ENCODE measurements at regions of chr20 and their contacts with region 1.

Region 1: DNA sequence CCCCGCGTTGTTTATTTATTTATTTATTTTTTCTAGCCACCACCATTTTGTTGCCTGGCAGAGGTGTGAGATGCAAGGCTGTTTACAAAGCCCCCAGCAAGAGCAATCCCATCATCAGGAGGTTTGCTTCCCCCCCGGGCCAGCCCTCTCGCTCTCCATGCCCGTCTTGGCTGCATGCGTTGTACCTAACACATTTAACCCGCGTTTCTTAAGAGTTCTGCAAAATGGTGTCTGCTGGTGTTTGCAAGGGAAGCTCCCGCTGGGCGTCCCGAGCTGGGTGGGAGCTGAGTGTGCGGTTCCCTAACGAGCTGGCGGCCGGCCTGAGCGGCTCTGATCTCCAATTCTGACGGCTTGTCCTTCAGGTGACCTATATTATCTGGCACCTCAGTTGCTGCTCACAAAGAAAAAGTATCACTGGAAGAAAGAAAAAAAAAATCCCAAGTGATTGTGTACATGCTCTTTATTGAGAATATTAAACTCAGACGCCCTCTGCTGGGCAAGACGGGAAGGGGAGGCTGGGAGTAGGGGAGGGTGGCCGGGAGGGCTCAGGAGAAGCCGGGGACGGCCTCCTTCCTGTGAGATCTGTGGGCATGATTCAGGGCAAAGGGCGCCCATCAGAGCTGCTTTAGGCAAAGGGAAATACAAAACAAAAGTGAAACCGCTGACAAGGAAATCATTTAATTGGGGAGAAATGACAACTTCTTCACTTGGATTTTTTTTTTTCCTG is 154.8 kb downstream of the BCAS1 start:
- DNase-seq: peak; percentile 98
- H3K4me3 ChIP-seq: peak overlapping the region; percentile 68
- H3K4me3 Mint-ChIP-seq: peak overlapping the region; percentile 92
- H3K27ac Mint-ChIP-seq: peak overlapping the region; percentile 82
- H3K4me1 ChIP-seq: peaks cover 10% of the 10 kb centered on the region
- H3K4me1 Mint-ChIP-seq: peaks cover 34% of the 10 kb centered on the region
- H3K27me3 ChIP-seq: no peaks in the 10 kb centered on the region
- H3K27me3 Mint-ChIP-seq: no peaks in the 10 kb centered on the region
- CTCF ChIP-seq: peak; percentile 98 to 99

Region 2: DNA sequence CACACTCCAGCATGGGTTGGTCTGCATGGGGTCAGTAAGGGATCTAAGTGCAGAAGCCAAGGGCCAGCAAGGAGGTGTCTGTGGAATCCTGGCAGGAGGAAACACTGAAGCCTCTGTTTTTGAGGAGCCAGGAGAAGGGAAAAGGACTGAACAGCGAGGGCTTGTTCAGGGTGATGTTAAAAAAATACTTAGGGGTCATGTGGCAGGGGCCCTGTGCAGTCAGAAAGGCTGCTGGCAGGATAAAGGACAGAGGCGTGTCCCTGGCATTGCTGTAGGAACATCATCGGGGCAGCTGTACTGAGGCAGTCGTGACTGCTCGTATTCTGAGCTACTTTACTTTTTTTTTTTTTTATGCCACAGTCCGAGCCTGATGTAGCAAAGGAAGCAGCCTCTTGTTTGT is 1597.0 kb before region 1 on chr20:
- CTCF ChIA-PET with region 1: no interaction called
- POLR2A ChIA-PET with region 1: no interaction called
- intact Hi-C with region 1: no loop called
- DNase-seq: no peak
- H3K4me3 ChIP-seq: no peak overlapping the region
- H3K4me3 Mint-ChIP-seq: no peak overlapping the region
- H3K27ac Mint-ChIP-seq: no peak overlapping the region
- H3K4me1 ChIP-seq: no peaks in the 10 kb centered on the region
- H3K4me1 Mint-ChIP-seq: no peaks in the 10 kb centered on the region
- H3K27me3 ChIP-seq: no peaks in the 10 kb centered on the region
- H3K27me3 Mint-ChIP-seq: peaks cover 24% of the 10 kb centered on the region
- CTCF ChIP-seq: no peak

Region 3: DNA sequence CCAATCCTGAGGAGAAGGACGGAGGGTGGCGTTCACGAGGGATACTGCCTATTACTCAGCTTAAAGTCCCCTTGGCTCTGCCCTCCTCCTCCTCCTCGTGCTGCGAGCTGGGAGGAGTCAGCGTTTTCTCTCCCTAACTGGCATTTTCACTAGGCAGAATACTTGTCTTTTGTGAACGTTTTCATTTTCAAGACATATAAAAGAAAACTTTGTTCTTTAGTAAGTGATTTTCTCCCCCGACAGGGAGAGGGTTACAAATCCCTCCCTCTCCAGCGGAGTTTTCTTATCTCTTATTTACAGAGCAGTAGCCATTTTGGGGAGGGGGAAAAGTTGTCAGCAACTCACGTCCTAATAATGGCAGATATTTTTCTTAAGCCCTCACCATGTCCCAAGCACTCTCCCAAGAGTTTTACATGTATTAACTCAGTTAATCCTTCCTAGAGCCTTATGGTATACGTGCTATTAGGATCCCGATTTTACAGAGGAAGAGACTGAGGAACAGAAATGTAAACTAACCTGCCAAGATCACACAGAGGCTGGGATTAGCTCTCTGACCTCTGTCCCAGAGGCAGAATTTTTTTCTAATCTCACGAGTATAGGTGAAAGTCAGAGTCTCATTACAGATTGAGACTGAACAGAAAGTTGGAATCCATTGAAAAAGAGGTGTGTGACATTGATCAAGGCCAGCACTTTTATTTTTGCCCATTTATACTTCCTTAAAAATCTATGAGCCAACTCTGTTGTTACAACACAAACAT is 292.0 kb before region 1 on chr20:
- CTCF ChIA-PET with region 1: interaction called, 10 read pairs
- POLR2A ChIA-PET with region 1: no interaction called
- intact Hi-C with region 1: no loop called
- DNase-seq: peak; percentile 86 to 89
- H3K4me3 ChIP-seq: peak overlapping the region; percentile 41
- H3K4me3 Mint-ChIP-seq: peak overlapping the region; percentile 83
- H3K27ac Mint-ChIP-seq: peak overlapping the region; percentile 97
- H3K4me1 ChIP-seq: peaks cover 33% of the 10 kb centered on the region
- H3K4me1 Mint-ChIP-seq: peaks cover 24% of the 10 kb centered on the region
- H3K27me3 ChIP-seq: no peaks in the 10 kb centered on the region
- H3K27me3 Mint-ChIP-seq: no peaks in the 10 kb centered on the region
- CTCF ChIP-seq: peak in 1 of 2 experiments; percentile 35

Region 4: DNA sequence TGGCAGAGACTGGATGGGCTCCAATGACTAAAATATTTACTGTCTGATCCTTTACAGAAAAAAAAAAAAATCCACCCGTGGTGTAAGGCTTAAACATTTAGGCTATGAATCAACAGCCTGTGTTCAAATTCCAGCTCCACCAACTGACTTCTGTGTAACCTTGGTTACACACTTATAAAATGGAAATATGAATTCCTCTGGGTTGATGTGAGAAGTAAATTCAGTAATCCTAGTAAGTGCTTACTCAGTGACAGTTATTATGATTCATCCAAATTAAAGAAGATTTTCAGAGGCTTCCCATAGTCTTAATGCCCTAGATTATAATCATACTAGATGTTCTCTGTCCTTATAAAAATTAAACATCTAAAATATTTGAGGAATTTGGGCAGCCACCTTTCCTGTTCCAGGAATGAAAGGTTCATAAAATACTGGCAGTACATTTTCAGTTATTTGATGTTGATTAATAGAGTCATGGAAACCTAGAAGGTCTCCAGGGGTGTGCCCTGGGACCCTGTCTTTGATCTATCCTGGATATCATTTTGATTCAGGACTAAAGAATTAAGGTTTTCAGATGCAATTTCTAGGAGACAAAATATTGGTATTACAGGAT is 141.7 kb before region 1 on chr20:
- CTCF ChIA-PET with region 1: interaction called, 4 read pairs
- POLR2A ChIA-PET with region 1: no interaction called
- intact Hi-C with region 1: loop called (anchors 1 kb)
- DNase-seq: peak; percentile 29 to 52
- H3K4me3 ChIP-seq: no peak overlapping the region
- H3K4me3 Mint-ChIP-seq: peak overlapping the region; percentile 22
- H3K27ac Mint-ChIP-seq: peak overlapping the region; percentile 66
- H3K4me1 ChIP-seq: peaks cover 60% of the 10 kb centered on the region
- H3K4me1 Mint-ChIP-seq: peaks cover 64% of the 10 kb centered on the region
- H3K27me3 ChIP-seq: no peaks in the 10 kb centered on the region
- H3K27me3 Mint-ChIP-seq: no peaks in the 10 kb centered on the region
- CTCF ChIP-seq: no peak

Region 5: DNA sequence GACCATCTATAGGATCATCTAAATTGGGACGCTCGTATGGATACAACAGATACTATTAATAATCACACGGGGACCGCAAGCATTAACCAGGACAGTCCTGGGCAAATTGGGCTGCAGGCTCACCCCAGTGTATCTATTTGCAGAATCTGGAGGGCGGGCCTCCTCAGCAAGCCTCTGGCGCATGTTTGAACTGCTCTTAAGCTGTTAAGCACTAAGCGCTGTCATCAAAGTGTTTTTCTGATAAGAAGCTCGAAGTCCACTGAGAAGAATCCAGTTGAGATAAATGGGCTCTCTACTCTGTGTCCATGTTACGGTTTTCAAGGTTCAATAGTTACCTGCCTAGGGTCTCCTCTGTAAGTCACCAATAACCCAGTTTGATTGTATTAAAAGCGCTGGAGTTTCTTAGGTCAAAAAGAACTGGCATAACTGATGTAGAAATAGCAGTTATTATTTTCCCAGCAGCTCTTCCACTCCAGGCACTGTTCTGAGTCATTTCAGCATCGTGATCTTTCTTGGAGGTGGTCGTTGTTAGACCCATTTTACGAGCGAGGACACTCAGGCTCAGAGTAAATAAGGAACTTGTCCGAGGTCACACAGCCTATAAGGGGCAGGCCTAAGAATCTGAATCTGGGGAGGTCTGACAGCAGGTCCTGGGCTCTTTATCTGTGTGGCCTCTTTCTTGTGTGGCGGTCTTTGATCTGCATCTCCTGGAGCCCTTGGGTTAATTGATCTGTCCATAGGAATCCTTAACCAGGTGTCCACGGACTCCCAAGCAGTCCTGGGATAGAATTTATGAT is 114.6 kb before region 1 on chr20:
- CTCF ChIA-PET with region 1: interaction called, 7 read pairs
- POLR2A ChIA-PET with region 1: no interaction called
- intact Hi-C with region 1: loop called (anchors 1 kb)
- DNase-seq: peak; percentile 97 to 99
- H3K4me3 ChIP-seq: peak overlapping the region; percentile 21
- H3K4me3 Mint-ChIP-seq: peak overlapping the region; percentile 74
- H3K27ac Mint-ChIP-seq: peak overlapping the region; percentile 95
- H3K4me1 ChIP-seq: peaks cover 54% of the 10 kb centered on the region
- H3K4me1 Mint-ChIP-seq: peaks cover 67% of the 10 kb centered on the region
- H3K27me3 ChIP-seq: no peaks in the 10 kb centered on the region
- H3K27me3 Mint-ChIP-seq: no peaks in the 10 kb centered on the region
- CTCF ChIP-seq: no peak

Region 6: DNA sequence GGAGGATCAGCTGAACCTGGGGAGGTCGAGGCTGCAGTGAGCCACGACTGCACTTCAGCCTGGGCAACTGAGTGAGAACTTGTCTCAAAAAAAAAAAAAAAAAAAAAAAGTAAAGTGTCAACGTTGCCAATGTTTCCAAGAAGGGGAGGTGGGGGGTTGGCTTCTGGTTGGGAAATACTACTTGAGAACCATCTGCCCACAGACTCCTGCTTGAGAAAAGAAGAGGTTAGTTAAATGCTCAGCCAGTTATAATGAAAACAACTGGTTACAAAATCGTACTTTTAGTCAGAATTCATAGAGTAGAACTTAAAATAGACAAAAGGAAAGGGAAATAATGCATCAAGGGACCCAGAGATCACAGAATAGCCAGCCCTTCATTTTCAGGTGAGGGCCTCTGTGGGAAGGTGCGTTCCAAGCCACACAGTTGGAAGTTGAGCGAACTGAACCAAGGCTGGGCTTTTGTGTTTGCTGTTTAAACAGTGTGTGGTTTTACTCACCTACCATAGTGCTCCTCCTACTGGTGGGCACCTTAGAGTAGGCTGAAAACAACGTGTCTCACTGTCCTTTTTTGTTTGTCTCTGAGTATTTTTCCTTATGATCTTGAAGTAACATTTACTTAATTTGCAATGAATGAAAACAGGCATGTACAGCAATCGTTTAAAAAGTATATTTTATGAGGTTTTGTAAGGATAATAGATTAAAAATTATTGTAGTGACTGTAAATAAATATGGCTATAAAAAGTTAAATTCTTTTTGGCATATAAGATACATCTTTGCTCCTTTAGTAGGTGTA is 45.9 kb before region 1 on chr20:
- CTCF ChIA-PET with region 1: interaction called, 15 read pairs
- POLR2A ChIA-PET with region 1: no interaction called
- intact Hi-C with region 1: loop called (anchors 1 kb)
- DNase-seq: peak; percentile 94
- H3K4me3 ChIP-seq: no peak overlapping the region
- H3K4me3 Mint-ChIP-seq: peak overlapping the region; percentile 29
- H3K27ac Mint-ChIP-seq: peak overlapping the region; percentile 45
- H3K4me1 ChIP-seq: peaks cover 59% of the 10 kb centered on the region
- H3K4me1 Mint-ChIP-seq: peaks cover 63% of the 10 kb centered on the region
- H3K27me3 ChIP-seq: no peaks in the 10 kb centered on the region
- H3K27me3 Mint-ChIP-seq: no peaks in the 10 kb centered on the region
- CTCF ChIP-seq: peak; percentile 99 to 100

Region 7: GRCh38 chr20:53900380-53900999 is 15.1 kb before region 1 on chr20:
- CTCF ChIA-PET with region 1: interaction called, 12 read pairs
- POLR2A ChIA-PET with region 1: interaction called, 3 read pairs
- intact Hi-C with region 1: no loop called
- DNase-seq: no peak
- H3K4me3 ChIP-seq: no peak overlapping the region
- H3K4me3 Mint-ChIP-seq: no peak overlapping the region
- H3K27ac Mint-ChIP-seq: no peak overlapping the region
- H3K4me1 ChIP-seq: peaks cover 19% of the 10 kb centered on the region
- H3K4me1 Mint-ChIP-seq: peaks cover 15% of the 10 kb centered on the region
- H3K27me3 ChIP-seq: no peaks in the 10 kb centered on the region
- H3K27me3 Mint-ChIP-seq: no peaks in the 10 kb centered on the region
- CTCF ChIP-seq: no peak

Region 8: GRCh38 chr20:54086483-54087039 is 171.0 kb after region 1 on chr20:
- CTCF ChIA-PET with region 1: no interaction called
- POLR2A ChIA-PET with region 1: no interaction called
- intact Hi-C with region 1: no loop called
- DNase-seq: no peak
- H3K4me3 ChIP-seq: no peak overlapping the region
- H3K4me3 Mint-ChIP-seq: no peak overlapping the region
- H3K27ac Mint-ChIP-seq: no peak overlapping the region
- H3K4me1 ChIP-seq: peaks cover 6% of the 10 kb centered on the region; the same call in 1 of the 2 replicates
- H3K4me1 Mint-ChIP-seq: peaks cover 7% of the 10 kb centered on the region
- H3K27me3 ChIP-seq: no peaks in the 10 kb centered on the region
- H3K27me3 Mint-ChIP-seq: peaks cover 3% of the 10 kb centered on the region
- CTCF ChIP-seq: no peak

Measured in Caco-2 (cell line).